ENCODE measurements at regions of chr2 and their contacts with region 1.

Region 1: GRCh38 chr2:139031722-139032121 is 251.5 kb upstream of the NXPH2 start:
- DNase-seq: peak; percentile 18
- H3K4me3 Mint-ChIP-seq: no peak overlapping the region
- H3K27ac Mint-ChIP-seq: no peak overlapping the region
- H3K4me1 Mint-ChIP-seq: no peaks in the 10 kb centered on the region
- H3K27me3 Mint-ChIP-seq: peaks cover 53% of the 10 kb centered on the region
- CTCF ChIP-seq: no peak

Region 2: DNA sequence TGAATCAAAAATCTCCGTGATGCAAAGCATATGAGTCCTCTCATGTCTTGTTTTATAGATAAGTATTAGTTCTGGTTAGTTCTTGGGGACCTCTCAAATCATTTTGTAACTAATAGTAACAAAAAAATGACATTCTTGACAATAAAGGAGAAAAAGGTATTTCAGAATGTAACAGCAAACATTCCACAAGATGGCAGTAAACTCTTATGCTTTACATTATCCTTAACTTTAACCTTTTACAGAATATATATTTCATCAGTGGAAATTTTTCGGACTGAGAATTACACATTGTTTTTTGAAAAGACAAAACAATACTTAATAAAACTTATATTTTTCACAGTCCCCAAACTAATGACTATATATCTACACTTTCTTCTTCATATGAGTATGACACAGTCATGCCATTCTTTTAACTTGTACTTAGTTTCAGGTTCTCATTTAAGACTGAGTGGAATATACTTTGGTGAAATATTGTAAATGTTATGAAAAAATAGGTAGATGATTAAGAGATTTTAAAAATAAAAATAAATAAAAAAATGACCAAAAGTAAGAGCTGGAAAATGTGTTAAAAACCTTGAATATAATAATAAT is 108.7 kb before region 1 on chr2:
- CTCF ChIA-PET with region 1: interaction called, 7 read pairs
- POLR2A ChIA-PET with region 1: no interaction called
- intact Hi-C with region 1: loop called (anchors 1 kb)
- DNase-seq: peak; percentile 27
- H3K4me3 Mint-ChIP-seq: no peak overlapping the region
- H3K27ac Mint-ChIP-seq: no peak overlapping the region
- H3K4me1 Mint-ChIP-seq: no peaks in the 10 kb centered on the region
- H3K27me3 Mint-ChIP-seq: peaks cover 52% of the 10 kb centered on the region
- CTCF ChIP-seq: peak; percentile 53

Region 3: GRCh38 chr2:139099721-139100120 is 68.0 kb after region 1 on chr2:
- CTCF ChIA-PET with region 1: no interaction called
- POLR2A ChIA-PET with region 1: no interaction called
- intact Hi-C with region 1: no loop called
- DNase-seq: no peak
- H3K4me3 Mint-ChIP-seq: no peak overlapping the region
- H3K27ac Mint-ChIP-seq: no peak overlapping the region
- H3K4me1 Mint-ChIP-seq: no peaks in the 10 kb centered on the region
- H3K27me3 Mint-ChIP-seq: no peaks in the 10 kb centered on the region
- CTCF ChIP-seq: no peak

Measured in MCF 10A (cell line).